ENCODE measurements at regions of chr12 and their contacts with region 1.

Region 1: DNA sequence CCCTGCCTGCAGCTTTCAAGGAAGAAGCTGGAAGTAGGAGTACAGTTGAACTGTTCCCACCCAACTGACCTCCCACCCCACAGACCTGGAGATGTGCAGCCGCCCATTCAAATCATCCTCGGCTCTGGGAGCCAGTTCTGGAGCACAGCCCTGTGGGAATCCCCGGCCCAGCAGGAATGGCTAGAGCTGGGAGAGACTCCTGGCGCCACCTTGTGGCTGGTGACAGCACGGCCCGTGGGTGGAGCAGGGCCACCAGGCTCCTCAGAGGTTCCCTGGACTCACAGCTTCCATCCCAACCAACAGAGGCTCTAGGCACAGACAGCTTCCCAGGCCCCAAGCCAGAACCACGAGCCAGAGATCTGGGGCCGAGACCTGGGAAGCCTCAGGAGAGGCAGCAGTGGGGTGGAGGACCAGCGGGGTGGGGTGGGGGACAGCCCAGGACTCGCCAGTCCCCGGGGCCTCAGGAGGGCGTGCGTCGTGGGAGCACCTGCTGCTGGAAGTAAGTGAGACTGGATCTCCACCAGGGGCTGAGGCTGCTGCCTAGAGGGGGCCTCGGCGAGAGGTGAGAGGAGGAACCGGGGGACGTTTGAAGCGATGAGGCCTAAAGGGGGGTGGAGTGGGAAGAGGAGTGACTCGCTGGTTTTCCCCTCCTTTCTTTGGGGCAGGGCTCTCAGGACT is 43.4 kb downstream of the RNF34 start:
- DNase-seq: peak; percentile 81
- H3K4me3 Mint-ChIP-seq: no peak overlapping the region
- H3K27ac Mint-ChIP-seq: peak overlapping the region; percentile 74
- H3K4me1 Mint-ChIP-seq: peaks cover 3% of the 10 kb centered on the region
- H3K27me3 Mint-ChIP-seq: no peaks in the 10 kb centered on the region

Region 2: DNA sequence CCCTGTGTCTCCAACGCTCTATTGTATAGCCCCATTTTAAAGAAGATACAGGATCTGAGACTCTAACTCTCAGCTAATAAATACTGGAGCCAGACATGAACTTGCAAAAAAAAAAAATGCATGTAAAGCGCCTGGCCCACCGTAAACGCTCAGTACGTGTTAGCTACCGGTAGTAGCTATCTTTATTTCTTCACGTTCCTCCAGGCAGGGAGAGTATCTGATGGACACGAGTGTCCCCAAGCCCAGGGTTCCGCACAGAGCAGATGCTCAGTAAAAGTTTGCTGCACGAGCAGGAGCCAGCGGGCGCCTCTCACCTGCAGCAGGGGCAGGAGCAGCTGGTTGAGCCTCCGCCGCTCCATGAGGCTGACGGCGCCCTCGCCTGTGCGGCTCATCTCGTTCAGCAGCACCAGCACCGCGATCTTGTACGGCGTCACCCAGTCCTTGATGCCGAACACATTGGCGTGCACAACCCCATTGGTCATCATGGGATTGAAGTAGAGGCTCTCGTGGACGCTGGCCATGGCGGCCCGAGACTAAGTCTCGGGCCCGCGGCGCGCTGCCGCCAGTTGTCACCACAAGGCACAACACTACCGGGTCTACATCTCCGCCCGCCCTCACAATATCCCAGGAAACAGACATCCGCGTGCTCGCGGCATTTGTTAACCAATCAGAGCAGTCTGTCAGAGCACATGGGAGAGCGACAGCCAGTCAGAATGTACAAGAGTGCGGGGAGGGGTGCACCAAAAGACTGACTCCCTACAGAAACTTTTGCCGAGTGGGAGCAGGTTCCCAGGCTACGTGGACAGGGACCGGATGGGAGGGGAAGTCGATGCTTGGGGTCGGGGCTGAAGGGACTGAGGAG is 91.3 kb before region 1 on chr12 and contains the start of gene ANAPC5:
- CTCF ChIA-PET with region 1: interaction called, 14 read pairs
- intact Hi-C with region 1: loop called (anchors 1 kb)
- DNase-seq: peak; percentile 96
- H3K4me3 Mint-ChIP-seq: peak within 1 kb of the TSS; percentile 98
- H3K27ac Mint-ChIP-seq: peak within 1 kb of the TSS; percentile 86
- H3K4me1 Mint-ChIP-seq: peaks cover 25% of the 10 kb centered on the region
- H3K27me3 Mint-ChIP-seq: no peaks in the 10 kb centered on the region
- total RNA-seq, gene ANAPC5: 117 to 119 TPM

Region 3: GRCh38 chr12:121423682-121424623 is 19.4 kb before region 1 on chr12:
- CTCF ChIA-PET with region 1: interaction called, 18 read pairs
- intact Hi-C with region 1: no loop called
- DNase-seq: no peak
- H3K4me3 Mint-ChIP-seq: no peak overlapping the region
- H3K27ac Mint-ChIP-seq: no peak overlapping the region
- H3K4me1 Mint-ChIP-seq: no peaks in the 10 kb centered on the region
- H3K27me3 Mint-ChIP-seq: no peaks in the 10 kb centered on the region

Region 4: DNA sequence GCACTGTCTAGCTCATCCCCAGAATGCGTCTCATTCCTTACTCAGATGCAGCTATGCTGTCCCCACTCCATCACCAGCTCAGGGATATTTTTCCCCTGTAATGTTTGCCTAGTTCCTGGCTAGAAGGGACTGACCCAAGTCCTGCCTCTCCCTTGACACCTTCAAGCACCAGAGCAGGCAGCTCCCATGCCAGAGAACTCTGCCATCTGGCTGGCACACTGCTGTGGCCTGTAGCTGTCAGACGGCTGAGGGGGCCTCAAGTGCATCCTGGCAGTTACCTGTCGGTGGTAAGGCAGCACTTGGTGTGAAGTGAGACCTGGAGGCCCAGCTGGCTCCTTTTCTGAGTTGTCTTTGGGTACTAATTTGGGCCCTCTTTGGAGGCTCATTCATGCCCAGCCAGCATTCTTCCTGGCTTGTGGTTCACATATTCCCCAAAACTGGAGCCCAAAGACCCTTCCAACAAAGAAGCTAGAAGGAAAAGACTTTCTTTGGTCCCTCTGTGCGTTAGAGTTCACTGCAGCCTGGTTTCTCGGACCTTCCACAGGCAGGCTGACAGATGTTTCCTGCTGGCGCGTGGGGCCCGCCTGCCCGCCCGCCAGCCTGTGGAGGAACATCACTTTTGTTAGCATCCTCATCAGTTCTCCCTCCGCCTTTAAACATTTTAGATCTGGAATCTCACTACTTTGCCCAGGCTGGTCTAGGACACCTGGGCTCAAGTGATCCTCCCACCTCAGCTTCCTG is 10.4 kb before region 1 on chr12:
- CTCF ChIA-PET with region 1: interaction called, 20 read pairs
- intact Hi-C with region 1: no loop called
- DNase-seq: no peak
- H3K4me3 Mint-ChIP-seq: no peak overlapping the region
- H3K27ac Mint-ChIP-seq: peak overlapping the region; percentile 50
- H3K4me1 Mint-ChIP-seq: no peaks in the 10 kb centered on the region
- H3K27me3 Mint-ChIP-seq: no peaks in the 10 kb centered on the region

Region 5: DNA sequence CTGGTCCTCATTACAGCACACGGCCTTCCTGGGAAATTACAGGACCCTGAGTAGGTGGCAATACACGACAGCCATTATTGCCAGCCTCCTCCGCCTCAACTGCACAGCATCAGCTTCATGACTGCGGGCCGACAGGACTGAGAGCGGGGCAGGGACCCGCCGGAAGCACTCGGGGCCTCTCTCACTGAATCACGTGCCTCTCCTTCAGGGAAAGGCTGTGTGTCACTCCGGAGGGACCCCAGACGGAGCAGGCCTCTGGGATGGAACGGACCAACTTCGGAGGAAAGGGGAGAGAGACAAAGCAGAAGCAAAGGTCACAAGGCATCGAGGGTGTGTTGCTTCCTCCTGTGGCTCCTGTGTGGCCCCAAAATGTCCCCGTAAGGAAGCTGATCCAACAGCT is 46.5 kb after region 1 on chr12:
- CTCF ChIA-PET with region 1: no interaction called
- intact Hi-C with region 1: no loop called
- DNase-seq: no peak
- H3K4me3 Mint-ChIP-seq: no peak overlapping the region
- H3K27ac Mint-ChIP-seq: no peak overlapping the region
- H3K4me1 Mint-ChIP-seq: peaks cover 6% of the 10 kb centered on the region
- H3K27me3 Mint-ChIP-seq: no peaks in the 10 kb centered on the region

Region 6: DNA sequence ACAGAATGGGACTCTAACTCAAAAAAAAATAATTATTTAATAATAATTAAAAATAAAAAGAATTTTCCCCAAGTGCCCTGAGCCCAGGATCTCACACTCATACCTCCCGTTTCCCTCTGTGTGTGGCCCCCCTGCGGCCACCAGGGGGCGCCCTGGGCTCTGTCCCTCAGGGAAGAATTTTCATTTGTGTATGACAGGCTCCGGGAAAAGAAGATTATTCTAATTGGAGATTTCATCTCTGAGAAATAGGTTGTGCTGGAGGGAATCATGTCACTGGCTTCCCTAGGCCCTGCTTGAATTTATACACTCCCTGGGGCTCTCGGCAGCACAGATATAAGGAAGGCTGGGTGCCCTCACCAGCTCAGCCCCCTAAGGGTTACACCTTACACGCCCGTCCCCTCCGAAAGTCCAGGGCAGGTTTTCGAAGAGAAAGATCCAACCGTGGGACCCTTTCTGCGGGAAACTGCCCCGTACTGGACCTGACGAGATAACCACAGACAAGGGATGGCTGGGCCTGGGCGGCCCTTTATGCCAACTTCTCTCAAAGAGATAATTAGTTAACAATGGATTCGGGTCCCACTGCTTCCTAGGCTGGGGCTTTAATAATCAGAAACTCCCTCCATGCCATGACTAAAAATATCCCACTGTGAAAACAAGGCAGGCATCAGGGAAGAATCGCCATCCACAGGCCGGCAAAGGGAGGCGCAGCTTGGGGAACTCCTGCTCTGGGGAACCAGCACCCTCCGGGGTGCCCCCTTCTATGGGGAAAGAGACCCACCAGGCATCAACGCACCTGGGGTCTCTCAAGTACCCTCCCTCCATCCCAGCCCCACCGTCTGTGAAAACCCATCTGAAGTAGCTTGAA is 56.8 kb after region 1 on chr12:
- CTCF ChIA-PET with region 1: no interaction called
- intact Hi-C with region 1: no loop called
- DNase-seq: peak; percentile 83
- H3K4me3 Mint-ChIP-seq: no peak overlapping the region
- H3K27ac Mint-ChIP-seq: no peak overlapping the region
- H3K4me1 Mint-ChIP-seq: peaks cover 9% of the 10 kb centered on the region
- H3K27me3 Mint-ChIP-seq: no peaks in the 10 kb centered on the region